Activated CD8-positive, alpha-beta T cell treated with anti-CD3 and anti-CD28 coated beads for 36 hours (primary cell): ENCODE measurements at regions of chr19 and their contacts with region 1.

Region 1: GRCh38 chr19:58513694-58514563 is 2.1 kb upstream of the SLC27A5 start:
- DNase-seq: peak; percentile 97
- ATAC-seq: peak; percentile 91
- H3K4me3 Mint-ChIP-seq: peak overlapping the region; percentile 88
- H3K27ac Mint-ChIP-seq: peak overlapping the region; percentile 93
- H3K4me1 Mint-ChIP-seq: peaks cover 35% of the 10 kb centered on the region
- H3K27me3 Mint-ChIP-seq: no peaks in the 10 kb centered on the region
- CTCF ChIP-seq: peak; percentile 98

Region 2: GRCh38 chr19:58278157-58279041 is 235.5 kb before region 1 on chr19 and contains the start of gene ZNF8:
- CTCF ChIA-PET with region 1: no interaction called
- POLR2A ChIA-PET with region 1: no interaction called
- intact Hi-C with region 1: no loop called
- DNase-seq: peak; percentile 99
- ATAC-seq: peak; percentile 98
- H3K4me3 Mint-ChIP-seq: peak within 1 kb of the TSS; percentile 99
- H3K27ac Mint-ChIP-seq: peak within 1 kb of the TSS; percentile 97
- H3K4me1 Mint-ChIP-seq: peaks cover 37% of the 10 kb centered on the region
- H3K27me3 Mint-ChIP-seq: no peaks in the 10 kb centered on the region
- CTCF ChIP-seq: no peak
- total RNA-seq, gene ZNF8: 5.2 to 5.8 TPM

Region 3: GRCh38 chr19:58499021-58499927 is 14.7 kb before region 1 on chr19:
- CTCF ChIA-PET with region 1: interaction called, 11 read pairs
- POLR2A ChIA-PET with region 1: interaction called, 27 read pairs
- intact Hi-C with region 1: no loop called
- DNase-seq: peak; percentile 100
- ATAC-seq: peak; percentile 97
- H3K4me3 Mint-ChIP-seq: peak overlapping the region; percentile 87
- H3K27ac Mint-ChIP-seq: peak overlapping the region; percentile 86
- H3K4me1 Mint-ChIP-seq: peaks cover 23% of the 10 kb centered on the region
- H3K27me3 Mint-ChIP-seq: no peaks in the 10 kb centered on the region
- CTCF ChIP-seq: no peak

Region 4: DNA sequence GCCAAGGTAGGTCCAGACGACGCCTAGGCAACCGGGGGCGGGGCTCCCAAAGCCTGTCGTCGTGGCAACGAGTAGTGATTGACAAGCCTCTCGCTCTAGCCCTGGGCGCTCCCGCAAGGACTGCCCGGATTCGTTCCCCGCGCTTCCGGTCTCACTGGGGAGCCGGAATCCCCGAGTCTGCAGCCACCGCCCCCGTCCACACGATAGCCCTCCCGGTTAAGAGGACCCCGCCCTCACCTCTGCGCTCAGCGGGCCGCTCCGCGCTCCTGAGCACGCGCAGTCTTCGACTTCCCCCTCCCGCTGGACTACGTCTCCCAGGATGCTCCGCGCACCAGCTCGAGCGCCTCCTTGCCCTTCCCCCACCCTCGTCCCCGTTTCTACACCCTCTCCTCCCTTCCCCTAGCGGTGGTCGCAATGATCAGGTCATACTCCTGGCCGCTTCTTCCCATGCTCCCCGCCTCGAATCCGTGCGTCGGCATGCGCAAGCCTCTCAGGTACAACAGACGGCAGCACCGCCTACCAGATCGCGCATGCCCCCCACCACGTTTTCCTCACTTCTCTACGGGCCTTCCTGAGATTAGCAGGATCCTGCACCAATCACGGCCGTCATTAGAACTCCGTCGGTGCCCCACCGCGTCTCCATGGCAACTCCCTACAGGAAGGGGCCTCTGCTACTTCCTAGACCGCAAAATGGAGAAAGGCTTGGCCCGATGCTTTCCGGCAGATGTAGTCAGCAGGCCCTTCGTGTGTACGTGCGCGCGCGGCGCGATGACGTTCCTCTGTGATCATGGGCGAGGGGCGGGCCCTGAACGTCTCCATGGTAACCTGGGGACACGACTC is 59.1 kb after region 1 on chr19 and contains the start of gene MZF1:
- CTCF ChIA-PET with region 1: interaction called, 131 read pairs
- POLR2A ChIA-PET with region 1: interaction called, 19 read pairs
- intact Hi-C with region 1: no loop called
- DNase-seq: peak; percentile 100
- ATAC-seq: peak; percentile 68
- H3K4me3 Mint-ChIP-seq: peak within 1 kb of the TSS; percentile 84
- H3K27ac Mint-ChIP-seq: peak within 1 kb of the TSS; percentile 100
- H3K4me1 Mint-ChIP-seq: peaks cover 42% of the 10 kb centered on the region
- H3K27me3 Mint-ChIP-seq: no peaks in the 10 kb centered on the region
- CTCF ChIP-seq: no peak
- total RNA-seq, gene MZF1: 12.1 to 13.4 TPM

Region 5: DNA sequence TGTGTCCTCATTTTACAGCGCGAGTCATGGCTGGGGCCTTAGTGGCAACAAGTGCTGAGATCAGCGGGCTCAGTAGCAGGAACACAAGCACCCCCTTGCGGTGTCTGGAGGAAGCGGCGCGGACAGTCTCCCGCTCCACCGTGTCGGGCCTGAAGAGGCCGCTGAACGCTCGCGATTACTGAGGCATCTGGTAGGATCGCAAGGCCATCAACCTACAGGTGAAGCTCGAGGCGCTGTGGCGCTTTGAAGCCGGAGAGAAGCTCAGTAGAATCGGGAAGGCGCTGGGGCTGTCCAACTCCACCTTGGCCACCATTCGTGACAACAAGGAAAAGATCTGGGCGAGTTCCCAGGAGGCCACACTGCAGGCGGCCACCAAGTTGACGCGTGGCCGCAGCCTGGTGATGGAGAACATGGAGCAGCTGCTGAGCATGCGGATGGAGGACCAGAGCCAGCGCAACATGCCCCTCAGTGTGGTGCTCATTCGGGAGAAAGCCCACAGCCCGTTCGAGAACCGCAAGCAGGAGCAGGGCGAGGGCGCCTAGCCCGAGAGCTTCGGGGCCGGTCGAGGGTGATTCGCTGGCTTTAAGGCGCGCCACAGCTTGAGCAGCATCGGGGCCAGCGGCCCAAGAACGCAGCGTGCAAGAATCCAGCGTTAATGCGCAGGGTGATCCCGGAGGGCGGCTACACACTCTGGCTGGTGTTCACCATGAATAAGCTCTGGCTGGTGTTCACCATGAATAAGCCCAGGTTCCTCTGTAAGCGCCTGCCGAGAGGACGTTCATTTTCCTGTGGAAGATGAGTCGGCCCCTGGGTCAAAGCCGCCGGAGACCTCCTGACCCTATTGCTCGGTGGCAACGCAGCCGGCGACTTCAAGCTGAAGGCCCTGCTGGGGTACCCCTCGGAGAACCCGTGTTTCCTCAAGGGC is 67.6 kb after region 1 on chr19:
- CTCF ChIA-PET with region 1: interaction called, 131 read pairs
- POLR2A ChIA-PET with region 1: interaction called, 19 read pairs
- intact Hi-C with region 1: no loop called
- DNase-seq: peak; percentile 96
- ATAC-seq: peak; percentile 100
- H3K4me3 Mint-ChIP-seq: no peak overlapping the region
- H3K27ac Mint-ChIP-seq: peak overlapping the region; percentile 84
- H3K4me1 Mint-ChIP-seq: peaks cover 33% of the 10 kb centered on the region
- H3K27me3 Mint-ChIP-seq: no peaks in the 10 kb centered on the region
- CTCF ChIP-seq: peak; percentile 97